GM18951 (cell line): ENCODE measurements at regions of chr20 and their contacts with region 1.

Region 1: GRCh38 chr20:45436732-45437391 is 20.9 kb downstream of the PIGT start:
- POLR2A ChIP-seq: no peak

Region 2: DNA sequence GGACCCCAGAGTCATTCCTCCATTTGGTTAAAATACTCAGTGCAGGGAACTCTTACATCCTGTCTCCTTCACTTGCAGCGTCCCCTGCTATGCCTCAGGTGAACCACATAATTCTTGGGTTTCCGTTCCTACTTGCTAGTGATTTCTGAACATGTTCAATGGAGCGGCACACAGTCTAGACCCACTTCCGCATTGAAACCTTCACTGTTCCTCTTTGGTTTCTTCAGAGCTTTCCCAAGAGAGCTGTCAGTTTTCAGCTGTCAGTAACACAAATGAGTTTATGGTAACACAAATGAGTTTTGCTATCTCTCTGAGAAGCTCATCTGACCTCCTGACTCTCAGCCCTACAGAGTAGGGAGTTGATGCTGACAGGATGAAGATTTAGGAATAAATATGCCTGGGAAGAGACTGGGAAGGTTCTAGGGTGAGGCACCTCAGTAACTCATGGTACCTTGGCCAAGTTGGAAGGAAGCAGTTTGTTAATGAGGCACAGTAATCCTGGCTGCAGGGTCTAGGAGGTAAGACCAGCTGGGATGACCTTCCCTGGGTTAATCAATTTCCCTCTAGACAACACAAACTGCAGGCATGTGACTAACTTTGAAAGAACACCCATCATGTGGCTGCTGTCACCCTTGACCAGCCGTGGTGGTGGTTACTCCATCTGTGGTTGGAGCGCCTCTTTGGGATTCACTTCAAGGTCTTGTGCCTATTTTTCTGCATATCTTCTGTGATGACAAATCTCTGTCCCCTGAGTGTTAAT is 68.5 kb before region 1 on chr20:
- in situ Hi-C with region 1: loop called (anchors 5 kb)
- POLR2A ChIP-seq: no peak